Dendritic cell treated with granulocyte-macrophage colony-stimulating factor and Interleukin-4, amounts not matched to agents 40 ng/mL and 50 ng/mL, for 4 days (primary cell): ENCODE measurements at regions of chr20 and their contacts with region 1.

Region 1: DNA sequence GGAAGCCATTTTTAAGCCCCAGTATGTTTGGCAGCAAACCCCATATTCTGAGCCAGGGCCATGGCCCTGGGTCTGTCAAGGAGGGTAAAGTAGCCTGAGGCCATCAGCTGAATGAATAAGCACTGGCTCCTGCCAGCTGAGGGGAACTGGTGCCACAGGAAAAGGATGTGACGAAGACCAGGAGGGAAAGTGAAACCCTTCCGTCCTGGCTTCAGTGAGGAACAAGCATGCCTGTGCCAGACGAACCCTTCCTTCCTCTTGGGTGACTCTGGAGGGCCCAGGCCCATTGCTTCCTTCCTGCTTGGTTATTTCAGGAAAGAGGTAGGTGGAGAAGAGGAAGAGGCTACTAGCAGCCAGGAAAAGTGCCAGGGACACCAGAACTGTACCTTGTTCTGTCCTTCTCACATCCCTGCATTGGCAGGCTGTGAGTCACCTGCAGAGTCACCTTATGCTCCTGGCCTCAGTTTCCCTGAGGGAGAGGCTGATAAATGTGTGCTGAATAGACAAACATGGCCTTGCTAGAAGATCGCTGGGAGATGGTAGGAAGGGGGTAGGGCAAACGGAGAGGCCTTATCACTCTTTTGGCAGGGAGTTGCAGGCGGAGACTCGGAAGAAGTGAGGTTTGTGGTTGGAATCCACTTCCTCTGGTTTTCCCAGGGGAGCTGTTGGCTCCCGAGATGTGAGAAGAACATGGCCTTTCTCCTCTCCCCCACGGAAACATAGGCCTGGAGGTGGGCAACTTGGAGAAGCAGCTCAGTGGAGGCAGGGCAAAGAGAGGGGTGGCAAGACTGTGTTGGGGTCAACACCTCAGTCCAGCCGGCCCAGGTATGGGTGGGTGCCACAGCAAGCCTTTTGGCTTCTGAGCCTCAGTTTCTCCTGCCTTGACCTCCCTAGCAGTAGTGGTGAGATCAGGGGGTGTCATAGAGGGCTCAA is 37.4 kb downstream of the COX4I2 start:
- H3K4me3 Mint-ChIP-seq: peak overlapping the region; percentile 72
- H3K27ac Mint-ChIP-seq: peak overlapping the region; percentile 93
- H3K4me1 Mint-ChIP-seq: peaks cover 75% of the 10 kb centered on the region
- H3K27me3 Mint-ChIP-seq: no peaks in the 10 kb centered on the region

Region 2: DNA sequence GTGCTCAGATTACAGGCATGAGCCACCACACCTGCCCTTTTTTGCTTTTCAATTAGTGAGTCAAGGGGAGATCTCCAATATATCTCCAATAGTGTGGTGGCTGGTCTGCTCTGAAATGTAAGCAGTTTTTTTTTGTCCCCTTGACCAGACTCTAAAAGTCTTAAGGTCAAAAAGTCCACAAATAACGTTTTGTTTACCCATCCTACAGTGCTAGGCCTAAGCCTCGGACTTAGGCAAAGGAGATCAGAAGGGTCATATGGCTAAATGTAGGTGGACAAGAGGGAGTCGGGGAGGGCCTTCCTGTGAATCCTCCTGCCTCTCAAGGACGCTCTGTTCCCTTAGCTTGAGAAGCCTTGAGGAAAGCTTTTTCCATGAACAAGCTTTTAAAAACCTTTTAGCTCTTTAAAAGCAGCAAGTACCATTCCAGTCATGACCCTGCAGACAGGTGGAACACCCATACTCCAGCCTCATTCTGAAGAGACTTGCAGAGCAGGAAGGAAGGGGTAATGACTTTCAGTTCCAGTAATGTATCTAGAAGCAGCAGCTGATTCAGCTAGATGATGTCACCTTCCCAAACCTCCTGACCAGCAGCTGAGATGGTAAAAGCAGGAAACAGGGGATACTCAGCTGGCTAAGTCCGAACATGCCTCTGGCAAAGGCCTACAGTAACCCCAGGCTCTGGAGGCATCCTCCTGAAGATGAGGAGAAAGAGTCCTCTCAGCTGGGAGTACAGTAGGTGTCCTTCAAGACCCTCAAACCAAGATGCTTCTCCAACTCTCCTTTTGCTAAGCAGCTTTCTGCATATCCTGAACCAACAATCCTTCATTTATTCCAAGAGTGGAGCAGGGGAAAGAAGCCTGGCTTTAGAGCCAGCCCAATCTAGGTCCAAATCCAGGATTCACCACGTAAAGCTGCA is 23.9 kb after region 1 on chr20:
- intact Hi-C with region 1: loop called (anchors 1 kb)
- H3K4me3 Mint-ChIP-seq: peak overlapping the region; percentile 39
- H3K27ac Mint-ChIP-seq: peak overlapping the region; percentile 83
- H3K4me1 Mint-ChIP-seq: peaks cover 72% of the 10 kb centered on the region
- H3K27me3 Mint-ChIP-seq: no peaks in the 10 kb centered on the region